Esophagus muscularis mucosa (tissue), 4 donors: ENCODE measurements at regions of chr14 and their contacts with region 1.

Region 1: GRCh38 chr14:65412032-65412846 is at the start of gene FUT8:
- DNase-seq: peak; percentile 96
- H3K4me3 ChIP-seq: peak within 1 kb of the TSS; percentile 87 to 97 (median 92)
- H3K27ac ChIP-seq: peak within 1 kb of the TSS; percentile 94 to 97 (median 96)
- H3K4me1 ChIP-seq: peaks cover 19% of the 10 kb centered on the region in 4 donors
- H3K27me3 ChIP-seq: no peaks in the 10 kb centered on the region
- CTCF ChIP-seq: peak; percentile 63 to 71 (median 65)
- EP300 ChIP-seq: no peak
- POLR2A ChIP-seq: peak; percentile 59
- total RNA-seq, gene FUT8: 12.8 to 22.2 (median 20.1) TPM

Region 2: GRCh38 chr14:65164068-65164824 is 248.0 kb before region 1 on chr14:
- intact Hi-C with region 1: loop called (anchors 10 kb)
- DNase-seq: no peak
- H3K4me3 ChIP-seq: no peak overlapping the region
- H3K27ac ChIP-seq: no peak overlapping the region
- H3K4me1 ChIP-seq: no peaks in the 10 kb centered on the region
- H3K27me3 ChIP-seq: no peaks in the 10 kb centered on the region
- CTCF ChIP-seq: peak; percentile 51 to 61 (median 54)
- EP300 ChIP-seq: no peak
- POLR2A ChIP-seq: no peak

Region 3: DNA sequence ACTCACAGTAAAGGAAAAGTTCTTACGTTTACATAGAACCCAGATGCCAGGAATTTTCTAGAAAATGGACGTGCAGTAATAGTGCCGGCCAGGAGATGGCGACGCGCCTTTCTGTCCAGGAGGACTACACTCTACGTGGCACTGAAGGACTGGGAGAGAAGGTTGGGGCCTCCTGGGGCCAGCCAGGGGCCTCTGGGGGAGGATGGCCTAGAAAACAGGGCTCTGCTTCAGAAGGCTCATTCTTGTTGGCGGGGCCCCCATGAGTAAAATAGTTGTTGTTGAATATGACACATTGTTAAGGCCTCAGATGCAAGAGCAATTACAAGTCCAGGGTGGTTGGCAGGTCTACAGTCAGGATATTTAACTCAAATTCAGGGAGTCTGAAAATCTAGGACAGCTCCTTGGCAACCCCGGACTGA is 189.8 kb before region 1 on chr14:
- intact Hi-C with region 1: loop called (anchors 10 kb)
- DNase-seq: no peak
- H3K4me3 ChIP-seq: no peak overlapping the region
- H3K27ac ChIP-seq: no peak overlapping the region
- H3K4me1 ChIP-seq: peaks cover 0 to 4% (median 0%) of the 10 kb centered on the region in 4 donors
- H3K27me3 ChIP-seq: no peaks in the 10 kb centered on the region
- CTCF ChIP-seq: peak; percentile 46 to 72 (median 53)
- EP300 ChIP-seq: no peak
- POLR2A ChIP-seq: no peak

Region 4: DNA sequence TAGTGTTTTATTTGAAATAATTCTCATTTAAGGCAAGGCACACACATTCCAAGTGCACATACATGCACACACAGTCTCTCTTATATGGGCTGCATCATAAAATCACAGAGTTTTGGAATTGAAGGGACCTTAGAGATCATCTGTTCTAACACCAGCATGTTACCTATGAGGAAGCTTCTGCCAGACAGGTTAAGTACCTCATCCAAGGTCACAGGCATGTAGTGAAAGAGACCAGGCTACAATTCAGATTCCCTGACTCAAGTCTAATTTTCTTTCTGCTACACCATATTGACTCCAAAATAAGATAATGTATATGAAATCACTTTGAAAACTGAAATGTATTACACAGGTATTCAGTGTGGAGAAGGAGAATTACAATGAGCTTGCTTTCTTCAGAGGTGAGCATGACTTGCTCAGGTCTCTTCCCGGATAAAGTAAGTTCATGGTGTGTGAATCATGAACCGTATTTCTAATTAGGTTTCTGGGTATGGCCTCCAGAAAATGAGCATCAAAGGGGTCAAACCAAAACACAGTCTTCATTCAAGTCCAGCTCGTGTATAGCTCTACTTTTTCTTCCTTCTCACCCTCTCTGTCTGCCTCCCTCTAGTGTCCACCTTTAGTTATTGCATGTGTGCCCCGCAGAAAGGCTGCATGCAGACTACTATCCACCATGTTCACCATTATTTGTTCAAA is 412.2 kb after region 1 on chr14:
- intact Hi-C with region 1: loop called (anchors 1 kb)
- DNase-seq: no peak
- H3K4me3 ChIP-seq: no peak overlapping the region
- H3K27ac ChIP-seq: no peak overlapping the region
- H3K4me1 ChIP-seq: no peaks in the 10 kb centered on the region
- H3K27me3 ChIP-seq: peaks cover 0 to 28% (median 0%) of the 10 kb centered on the region in 4 donors
- CTCF ChIP-seq: peak; percentile 83 to 96 (median 91)
- EP300 ChIP-seq: no peak
- POLR2A ChIP-seq: no peak

Region 5: DNA sequence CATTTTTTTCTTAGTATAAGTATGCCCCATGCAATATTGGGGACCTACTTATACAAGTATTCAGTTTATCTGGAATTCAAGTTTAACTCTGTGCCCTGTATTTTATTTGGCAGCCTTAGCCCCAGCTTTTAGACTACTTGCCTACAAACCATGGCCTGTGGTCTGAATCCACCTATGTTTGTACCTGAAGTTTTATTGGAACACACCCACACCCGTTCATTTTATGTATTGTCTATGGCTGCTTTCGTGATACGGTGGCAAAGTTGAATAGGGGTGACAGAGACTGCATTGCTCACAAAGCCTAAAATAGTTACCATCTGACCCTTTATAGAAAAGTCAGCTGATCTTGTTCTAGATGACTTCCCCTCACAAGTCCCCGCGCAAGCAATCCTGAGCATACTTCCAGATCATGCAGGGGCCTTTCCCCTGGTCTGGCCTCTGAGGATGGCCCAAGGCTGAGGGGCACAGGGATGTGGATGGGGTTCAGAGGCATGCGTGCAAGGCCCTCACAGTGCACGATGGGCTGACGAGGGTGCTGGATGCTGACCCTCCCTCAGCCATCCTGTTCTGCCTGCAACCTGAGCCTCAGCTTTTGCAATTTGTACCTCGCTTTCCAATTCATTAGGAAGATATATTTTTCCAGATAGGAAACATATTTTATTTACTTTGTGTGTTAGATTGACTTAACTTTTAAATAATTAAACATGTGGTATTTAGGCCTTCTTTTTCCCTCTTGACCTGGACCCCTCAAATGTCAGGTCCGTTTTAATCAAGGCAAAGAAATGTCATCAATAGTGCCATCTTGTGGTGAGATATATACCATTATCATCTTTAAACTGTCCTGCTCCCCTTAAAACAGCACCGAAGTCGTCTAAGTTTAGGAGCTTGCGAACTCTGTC is 546.7 kb after region 1 on chr14:
- intact Hi-C with region 1: loop called (anchors 5 kb)
- DNase-seq: no peak
- H3K4me3 ChIP-seq: no peak overlapping the region
- H3K27ac ChIP-seq: no peak overlapping the region
- H3K4me1 ChIP-seq: no peaks in the 10 kb centered on the region
- H3K27me3 ChIP-seq: peaks cover 0 to 13% (median 0%) of the 10 kb centered on the region in 4 donors
- CTCF ChIP-seq: peak; percentile 12 to 45 (median 29)
- EP300 ChIP-seq: no peak
- POLR2A ChIP-seq: no peak